Caco-2 (cell line): ENCODE measurements at regions of chr3 and their contacts with region 1.

Region 1: GRCh38 chr3:29171043-29171990 is 109.6 kb upstream of the RBMS3 start:
- DNase-seq: peak; percentile 43 to 48
- H3K4me3 ChIP-seq: no peak overlapping the region
- H3K4me3 Mint-ChIP-seq: no peak overlapping the region
- H3K27ac Mint-ChIP-seq: no peak overlapping the region
- H3K4me1 ChIP-seq: peaks cover 15% of the 10 kb centered on the region; the same call in 1 of the 2 replicates
- H3K4me1 Mint-ChIP-seq: peaks cover 10% of the 10 kb centered on the region
- H3K27me3 ChIP-seq: no peaks in the 10 kb centered on the region
- H3K27me3 Mint-ChIP-seq: no peaks in the 10 kb centered on the region
- CTCF ChIP-seq: no peak

Region 2: DNA sequence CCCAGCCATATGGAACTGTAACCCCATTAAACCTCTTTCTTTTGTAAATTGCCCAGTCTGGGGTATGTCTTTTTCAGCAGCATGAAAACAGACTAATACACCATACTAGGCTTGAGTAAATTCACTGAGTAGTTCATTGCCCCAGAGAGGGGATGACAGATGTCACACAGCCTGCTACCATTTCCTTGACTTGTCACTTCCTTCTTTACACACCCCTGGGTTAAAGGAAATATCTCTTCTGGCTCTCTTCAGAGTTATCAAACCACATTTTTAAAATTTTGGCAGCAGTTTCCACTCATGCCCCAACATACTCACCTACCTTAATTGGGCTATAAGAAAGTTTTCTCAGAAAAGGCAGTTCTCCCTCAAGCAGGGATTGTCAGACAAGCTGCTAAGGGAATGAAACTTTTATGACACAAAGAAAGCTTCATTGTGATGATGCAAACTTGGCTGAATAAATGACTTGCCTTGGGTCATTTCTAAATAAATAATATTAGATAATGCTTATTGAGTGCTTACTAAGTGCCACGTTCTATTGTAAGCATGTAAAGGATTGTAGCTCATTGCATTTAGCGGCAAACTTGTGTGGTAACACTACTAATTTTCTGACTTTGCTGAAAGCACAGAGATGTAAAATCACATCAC is 41.6 kb after region 1 on chr3:
- CTCF ChIA-PET with region 1: no interaction called
- POLR2A ChIA-PET with region 1: no interaction called
- intact Hi-C with region 1: loop called (anchors 1 kb)
- DNase-seq: no peak
- H3K4me3 ChIP-seq: no peak overlapping the region
- H3K4me3 Mint-ChIP-seq: no peak overlapping the region
- H3K27ac Mint-ChIP-seq: peak overlapping the region; percentile 48
- H3K4me1 ChIP-seq: peaks cover 12% of the 10 kb centered on the region; the same call in 1 of the 2 replicates
- H3K4me1 Mint-ChIP-seq: no peaks in the 10 kb centered on the region
- H3K27me3 ChIP-seq: no peaks in the 10 kb centered on the region
- H3K27me3 Mint-ChIP-seq: no peaks in the 10 kb centered on the region
- CTCF ChIP-seq: no peak